Pancreas (tissue), 10 donors: ENCODE measurements at regions of chr16 and their contacts with region 1.

Region 1: DNA sequence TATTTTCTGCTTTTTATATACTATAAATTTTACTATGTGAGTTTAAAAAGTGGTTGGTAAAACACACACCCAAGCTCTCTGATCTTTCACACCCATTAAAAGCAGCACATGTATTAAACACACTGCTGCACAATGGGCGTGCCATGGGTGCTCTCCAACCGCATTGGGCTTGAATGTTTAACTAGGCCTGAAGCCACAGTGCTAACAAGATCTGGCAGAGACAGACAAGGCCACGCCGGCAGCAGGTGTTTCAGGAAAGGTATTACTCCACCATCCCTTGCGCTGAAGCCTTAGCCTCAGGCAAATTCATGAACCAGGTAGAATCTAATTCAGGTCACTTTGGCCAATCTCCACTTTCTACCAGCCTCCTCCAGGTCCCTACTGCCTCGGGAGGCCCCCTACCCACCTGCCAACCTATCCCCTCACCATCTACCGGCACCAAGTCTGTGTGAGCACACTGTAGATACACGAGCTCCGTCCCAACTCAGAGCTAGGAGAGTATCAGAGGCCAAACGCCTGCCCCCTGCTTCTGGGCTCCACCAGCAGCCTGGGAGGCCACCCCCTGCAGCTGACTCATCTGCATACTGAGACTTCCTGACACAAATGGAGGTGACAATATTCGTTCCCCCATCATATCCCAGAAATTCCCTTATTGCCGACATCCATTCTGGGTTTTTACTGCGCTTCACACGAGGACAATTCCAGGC is 95.0 kb downstream of the ADCY9 start:
- DNase-seq: peak; percentile 84 to 95 (median 93)
- ATAC-seq: peak; percentile 89 to 96 (median 95)
- H3K4me3 ChIP-seq: no peak overlapping the region
- H3K27ac ChIP-seq: peak overlapping the region; percentile 40 to 91 (median 76)
- H3K4me1 ChIP-seq: peaks cover 18 to 29% (median 21%) of the 10 kb centered on the region in 3 donors
- H3K27me3 ChIP-seq: no peaks in the 10 kb centered on the region
- CTCF ChIP-seq: no peak

Region 2: GRCh38 chr16:3780570-3780969 is 240.7 kb before region 1 on chr16:
- intact Hi-C with region 1: no loop called
- DNase-seq: no peak
- ATAC-seq: peak; percentile 35 to 62 (median 60)
- H3K4me3 ChIP-seq: no peak overlapping the region
- H3K27ac ChIP-seq: no peak overlapping the region
- H3K4me1 ChIP-seq: peaks cover 0 to 3% (median 0%) of the 10 kb centered on the region in 3 donors
- H3K27me3 ChIP-seq: no peaks in the 10 kb centered on the region
- CTCF ChIP-seq: no peak

Region 3: GRCh38 chr16:4116337-4117249 is 95.4 kb after region 1 on chr16 and contains the start of gene ADCY9:
- intact Hi-C with region 1: loop called in 1 of 3 experiments (anchors 5 kb)
- DNase-seq: peak; percentile 76 to 92 (median 85)
- ATAC-seq: peak; percentile 76 to 84 (median 78)
- H3K4me3 ChIP-seq: peak within 1 kb of the TSS; percentile 55 to 76 (median 68)
- H3K27ac ChIP-seq: peak within 1 kb of the TSS; percentile 34 to 80 (median 66)
- H3K4me1 ChIP-seq: peaks cover 4 to 23% (median 10%) of the 10 kb centered on the region in 3 donors
- H3K27me3 ChIP-seq: no peaks in the 10 kb centered on the region
- CTCF ChIP-seq: no peak
- total RNA-seq, gene ADCY9: 17.2 to 20.9 (median 18.4) TPM